SK-N-SH (cell line): ENCODE measurements at regions of chr1 and their contacts with region 1.

Region 1: DNA sequence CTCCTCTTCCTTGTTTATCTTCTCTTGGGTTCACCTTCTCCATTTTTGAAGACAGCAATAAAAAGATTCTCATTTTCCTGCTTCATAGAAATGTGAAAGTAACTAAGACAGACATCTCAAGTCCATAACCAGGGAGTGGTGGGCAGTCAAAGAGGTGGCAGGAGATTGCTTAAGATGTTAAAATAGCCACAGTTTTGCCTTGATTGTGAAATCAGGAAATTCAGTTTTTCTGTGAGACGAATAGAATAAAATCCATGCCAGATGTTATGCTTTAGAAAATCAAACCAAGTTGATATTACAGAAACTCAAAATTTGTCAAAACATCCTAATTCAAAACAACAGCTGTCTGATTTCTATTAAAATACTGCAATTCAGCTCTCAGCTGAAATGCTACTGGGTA is 57.2 kb downstream of the TNN start:
- DNase-seq: no peak
- H3K4me3 ChIP-seq: no peak overlapping the region
- H3K27ac ChIP-seq: no peak overlapping the region
- H3K4me1 ChIP-seq: peaks cover 0 to 3% of the 10 kb centered on the region in 2 experiments; a peak in 1 of 4 replicates
- H3K27me3 ChIP-seq: no peaks in the 10 kb centered on the region
- CTCF ChIP-seq: no peak
- EP300 ChIP-seq: no peak
- RAD21 ChIP-seq: no peak

Region 2: DNA sequence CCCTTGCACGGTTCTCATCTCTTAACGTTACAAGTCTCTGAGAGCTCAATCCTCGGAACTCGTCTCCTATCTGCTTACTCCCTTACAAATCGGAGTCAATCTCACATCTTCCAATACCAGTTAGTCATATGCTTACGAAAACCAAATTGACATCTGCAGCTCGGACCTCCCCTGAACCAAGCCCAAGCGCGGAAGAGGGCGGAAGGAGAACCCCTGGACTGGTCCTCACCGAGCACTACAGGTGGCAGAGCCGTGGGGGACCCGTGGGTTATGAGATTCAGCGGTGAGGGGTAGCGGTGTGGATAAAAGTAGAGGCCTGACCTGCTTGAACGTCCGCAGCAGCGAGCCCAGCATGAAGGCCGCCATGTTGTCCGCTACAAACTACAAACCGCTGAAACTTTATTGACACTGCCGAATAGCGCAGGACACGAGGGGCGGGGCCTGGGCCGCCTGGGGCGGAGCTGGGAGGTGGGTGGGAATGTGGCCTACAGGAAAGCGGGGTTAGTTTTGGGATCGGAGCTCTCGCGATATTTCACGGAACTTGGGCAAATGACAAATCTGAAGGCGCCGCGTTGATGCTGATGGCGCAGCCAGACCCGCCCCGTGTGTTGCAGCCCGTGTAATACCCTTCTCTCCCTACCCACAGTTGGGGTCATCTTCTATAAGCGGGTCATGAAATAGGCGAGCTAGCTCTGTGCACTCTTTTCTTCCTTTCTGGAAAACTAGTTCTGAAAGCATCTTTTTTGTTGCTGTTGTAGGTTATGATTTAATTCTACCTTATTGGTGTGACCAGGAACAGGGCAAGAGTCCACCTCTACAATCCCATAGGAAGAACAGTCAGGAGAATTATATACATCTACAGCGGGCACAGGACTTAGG is 101.6 kb before region 1 on chr1 and contains the start of gene MRPS14:
- CTCF ChIA-PET with region 1: interaction called, 158 read pairs
- POLR2A ChIA-PET with region 1: interaction called, 3 read pairs
- DNase-seq: peak; percentile 91
- H3K4me3 ChIP-seq: peak within 1 kb of the TSS; percentile 85 to 94
- H3K27ac ChIP-seq: peak within 1 kb of the TSS; percentile 76 to 85
- H3K4me1 ChIP-seq: peaks cover 0 to 9% of the 10 kb centered on the region in 2 experiments; a peak in 2 of 4 replicates
- H3K27me3 ChIP-seq: no peaks in the 10 kb centered on the region
- CTCF ChIP-seq: no peak
- EP300 ChIP-seq: peak in 1 of 2 experiments; percentile 22; a peak in 1 of 4 replicates
- RAD21 ChIP-seq: no peak
- polyA plus RNA-seq, gene MRPS14: 18.2 and 18.7 TPM in 2 replicates

Region 3: GRCh38 chr1:175035865-175036264 is 89.0 kb before region 1 on chr1:
- CTCF ChIA-PET with region 1: interaction called, 158 read pairs
- POLR2A ChIA-PET with region 1: no interaction called
- DNase-seq: no peak
- H3K4me3 ChIP-seq: no peak overlapping the region
- H3K27ac ChIP-seq: no peak overlapping the region
- H3K4me1 ChIP-seq: no peaks in the 10 kb centered on the region
- H3K27me3 ChIP-seq: no peaks in the 10 kb centered on the region
- CTCF ChIP-seq: no peak
- EP300 ChIP-seq: no peak
- RAD21 ChIP-seq: no peak

Region 4: DNA sequence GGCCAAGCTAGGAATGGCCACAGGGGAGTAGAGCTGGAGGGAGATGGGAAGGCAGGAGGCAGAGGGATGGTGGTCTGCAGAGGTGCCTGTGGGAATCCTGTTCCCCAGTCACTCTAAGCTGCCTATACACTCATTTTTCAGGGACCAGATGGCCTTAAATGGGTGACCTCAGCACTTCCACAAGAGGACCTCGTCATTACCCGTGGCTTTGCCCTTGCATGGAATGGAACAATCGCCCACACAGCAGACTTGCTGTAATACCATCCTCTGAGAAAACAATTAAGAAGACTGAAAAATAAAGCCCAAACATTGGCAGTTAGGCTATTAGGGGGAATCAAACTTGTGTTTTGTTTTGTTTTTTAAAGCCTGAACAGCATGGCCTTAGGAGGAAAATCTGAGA is 70.1 kb before region 1 on chr1:
- CTCF ChIA-PET with region 1: interaction called, 11 read pairs
- POLR2A ChIA-PET with region 1: no interaction called
- DNase-seq: no peak
- H3K4me3 ChIP-seq: no peak overlapping the region; a peak in 1 of 4 replicates
- H3K27ac ChIP-seq: no peak overlapping the region
- H3K4me1 ChIP-seq: no peaks in the 10 kb centered on the region
- H3K27me3 ChIP-seq: no peaks in the 10 kb centered on the region
- CTCF ChIP-seq: no peak
- EP300 ChIP-seq: no peak
- RAD21 ChIP-seq: no peak

Region 5: DNA sequence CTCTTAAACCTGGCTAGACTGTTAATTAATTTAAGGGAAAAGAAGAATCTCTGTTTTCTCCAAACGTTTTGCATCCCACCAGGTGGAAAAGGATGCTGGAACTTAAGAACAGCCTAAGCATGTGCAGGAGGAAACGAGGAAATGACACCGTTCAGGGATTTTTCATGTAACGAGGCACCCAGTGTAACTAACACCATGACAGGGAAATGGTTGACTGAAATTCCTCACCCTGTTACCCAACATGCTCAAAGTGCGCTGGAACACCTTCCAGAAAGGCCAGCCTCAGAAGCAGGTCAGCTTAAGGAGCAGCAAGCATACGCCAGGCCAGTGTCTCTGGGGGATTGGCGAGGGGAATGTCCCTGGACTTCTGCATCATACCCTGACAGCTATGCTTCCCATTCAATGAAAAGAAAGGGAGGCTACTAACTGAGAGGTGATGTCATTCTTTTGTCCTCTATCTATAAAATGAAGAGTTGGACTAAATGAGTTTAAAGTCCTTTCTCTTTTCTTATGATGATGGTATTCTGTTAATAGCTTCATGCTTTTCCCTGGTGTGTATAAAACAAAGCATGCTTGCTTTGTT is 35.6 kb before region 1 on chr1:
- CTCF ChIA-PET with region 1: interaction called, 32 read pairs
- POLR2A ChIA-PET with region 1: no interaction called
- DNase-seq: no peak
- H3K4me3 ChIP-seq: no peak overlapping the region
- H3K27ac ChIP-seq: peak overlapping the region in 1 of 2 experiments; percentile 71; a peak in 2 of 4 replicates
- H3K4me1 ChIP-seq: peaks cover 0 to 23% of the 10 kb centered on the region in 2 experiments; a peak in 2 of 4 replicates
- H3K27me3 ChIP-seq: no peaks in the 10 kb centered on the region; the same call in 1 of the 2 replicates
- CTCF ChIP-seq: no peak
- EP300 ChIP-seq: no peak
- RAD21 ChIP-seq: no peak